ENCODE measurements at regions of chr2 and their contacts with region 1.

Region 1: GRCh38 chr2:68594674-68595492 is 48.5 kb upstream of the PROKR1 start:
- DNase-seq: no peak
- ATAC-seq: no peak
- H3K4me3 ChIP-seq: no peak overlapping the region
- H3K27ac ChIP-seq: peak overlapping the region in 1 of 4 donors; percentile 11
- H3K4me1 ChIP-seq: no peaks in the 10 kb centered on the region
- H3K27me3 ChIP-seq: no peaks in the 10 kb centered on the region
- CTCF ChIP-seq: peak in 4 of 5 experiments; percentile 20 to 65 (median 44)
- POLR2A ChIP-seq: no peak

Region 2: GRCh38 chr2:68319398-68320117 is 275.3 kb before region 1 on chr2 and contains the start of gene CNRIP1:
- in situ Hi-C with region 1: no loop called
- intact Hi-C with region 1: no loop called
- DNase-seq: peak; percentile 48 to 55
- ATAC-seq: peak; percentile 68 to 85
- H3K4me3 ChIP-seq: peak within 1 kb of the TSS; percentile 68 to 90 (median 78)
- H3K27ac ChIP-seq: peak within 1 kb of the TSS; percentile 80 to 88 (median 88)
- H3K4me1 ChIP-seq: peaks cover 0 to 17% of the 10 kb centered on the region in 2 donors
- H3K27me3 ChIP-seq: no peaks in the 10 kb centered on the region
- CTCF ChIP-seq: no peak
- POLR2A ChIP-seq: peak; percentile 54 to 70
- total RNA-seq, gene CNRIP1: 4.7 to 7.6 (median 6.5) TPM

Region 3: GRCh38 chr2:68467077-68467960 is 127.6 kb before region 1 on chr2 and contains the starts of genes APLF and FBXO48:
- in situ Hi-C with region 1: no loop called
- intact Hi-C with region 1: loop called (anchors 10 kb)
- DNase-seq: peak; percentile 97 to 98
- ATAC-seq: peak; percentile 99
- H3K4me3 ChIP-seq: peak within 1 kb of the TSS; percentile 75 to 93 (median 83)
- H3K27ac ChIP-seq: peak within 1 kb of the TSS; percentile 80 to 89 (median 87)
- H3K4me1 ChIP-seq: peaks cover 20 to 21% of the 10 kb centered on the region in 2 donors
- H3K27me3 ChIP-seq: no peaks in the 10 kb centered on the region
- CTCF ChIP-seq: no peak
- POLR2A ChIP-seq: peak; percentile 47 to 77
- total RNA-seq, gene APLF: 2.3 to 4.8 (median 3.5) TPM
- total RNA-seq, gene FBXO48: 1.1 to 1.9 (median 1.5) TPM

Region 4: GRCh38 chr2:68662466-68662865 is 67.6 kb after region 1 on chr2:
- in situ Hi-C with region 1: no loop called
- intact Hi-C with region 1: no loop called
- DNase-seq: no peak
- ATAC-seq: no peak
- H3K4me3 ChIP-seq: no peak overlapping the region
- H3K27ac ChIP-seq: no peak overlapping the region
- H3K4me1 ChIP-seq: no peaks in the 10 kb centered on the region
- H3K27me3 ChIP-seq: no peaks in the 10 kb centered on the region
- CTCF ChIP-seq: no peak
- POLR2A ChIP-seq: no peak